Activated B cell treated with CpG ODN at 0.5 μM for 24 hours (primary cell): ENCODE measurements at regions of chr1 and their contacts with region 1.

Region 1: GRCh38 chr1:231162297-231162969 is 575 bp downstream of the TRIM67 start:
- DNase-seq: no peak
- ATAC-seq: peak; percentile 42
- H3K4me3 Mint-ChIP-seq: no peak overlapping the region
- H3K27ac Mint-ChIP-seq: no peak overlapping the region
- H3K4me1 Mint-ChIP-seq: peaks cover 12% of the 10 kb centered on the region
- H3K27me3 Mint-ChIP-seq: peaks cover 47% of the 10 kb centered on the region
- CTCF ChIP-seq: no peak

Region 2: DNA sequence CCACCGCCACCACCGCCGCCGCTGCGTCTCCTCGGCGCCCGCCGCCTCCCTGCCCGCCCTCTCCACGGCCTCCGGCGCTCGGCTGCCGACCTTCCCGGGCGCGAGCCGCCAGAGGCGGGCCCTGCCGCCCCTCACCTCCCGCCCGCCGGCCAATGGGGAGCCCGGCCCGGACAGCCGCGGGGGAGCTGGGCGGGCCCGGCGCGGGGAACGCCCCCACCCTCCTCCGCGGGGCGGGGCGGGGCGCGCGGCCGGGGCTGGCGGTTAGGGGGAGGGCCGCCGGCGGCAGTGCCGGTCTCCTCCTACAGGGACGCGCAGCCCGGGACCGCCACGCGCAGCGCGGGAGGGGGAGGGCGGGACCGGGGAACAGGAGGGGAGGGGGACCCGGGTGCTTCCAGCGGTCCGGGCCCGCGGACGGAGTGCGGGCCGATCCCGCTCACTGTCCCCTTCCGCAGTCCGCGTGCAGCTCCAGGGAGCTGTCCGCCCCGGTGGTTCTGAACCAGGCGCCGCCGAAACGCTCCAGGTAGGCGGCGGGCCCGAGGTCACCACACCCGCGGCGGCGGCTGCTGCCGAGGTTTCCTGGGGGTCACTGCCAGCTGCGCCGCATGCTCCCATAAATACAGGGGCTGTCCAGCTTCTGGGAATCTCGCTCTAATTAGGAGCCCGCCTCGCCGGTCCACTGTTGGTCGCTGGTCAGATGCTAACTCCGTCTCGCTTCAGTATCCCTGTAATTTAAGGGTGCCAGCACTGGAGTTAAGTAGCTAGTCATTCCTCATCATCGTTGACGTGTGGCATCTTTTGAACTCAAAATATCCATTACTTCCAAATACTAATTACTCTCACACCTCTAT is 736.0 kb before region 1 on chr1 and contains the start of gene PGBD5:
- CTCF ChIA-PET with region 1: no interaction called
- POLR2A ChIA-PET with region 1: no interaction called
- intact Hi-C with region 1: loop called (anchors 10 kb)
- DNase-seq: peak; percentile 62
- ATAC-seq: peak; percentile 92
- H3K4me3 Mint-ChIP-seq: peak within 1 kb of the TSS; percentile 77
- H3K27ac Mint-ChIP-seq: no peak within 1 kb of the TSS
- H3K4me1 Mint-ChIP-seq: peaks cover 12% of the 10 kb centered on the region
- H3K27me3 Mint-ChIP-seq: peaks cover 57% of the 10 kb centered on the region
- CTCF ChIP-seq: no peak
- total RNA-seq, gene PGBD5: not detected in 2 replicates

Region 3: GRCh38 chr1:231487019-231487418 is 324.6 kb after region 1 on chr1:
- CTCF ChIA-PET with region 1: no interaction called
- POLR2A ChIA-PET with region 1: no interaction called
- intact Hi-C with region 1: no loop called
- DNase-seq: no peak
- ATAC-seq: no peak
- H3K4me3 Mint-ChIP-seq: no peak overlapping the region
- H3K27ac Mint-ChIP-seq: no peak overlapping the region
- H3K4me1 Mint-ChIP-seq: no peaks in the 10 kb centered on the region
- H3K27me3 Mint-ChIP-seq: no peaks in the 10 kb centered on the region
- CTCF ChIP-seq: no peak